ENCODE measurements at regions of chr9 and their contacts with region 1.

Region 1: DNA sequence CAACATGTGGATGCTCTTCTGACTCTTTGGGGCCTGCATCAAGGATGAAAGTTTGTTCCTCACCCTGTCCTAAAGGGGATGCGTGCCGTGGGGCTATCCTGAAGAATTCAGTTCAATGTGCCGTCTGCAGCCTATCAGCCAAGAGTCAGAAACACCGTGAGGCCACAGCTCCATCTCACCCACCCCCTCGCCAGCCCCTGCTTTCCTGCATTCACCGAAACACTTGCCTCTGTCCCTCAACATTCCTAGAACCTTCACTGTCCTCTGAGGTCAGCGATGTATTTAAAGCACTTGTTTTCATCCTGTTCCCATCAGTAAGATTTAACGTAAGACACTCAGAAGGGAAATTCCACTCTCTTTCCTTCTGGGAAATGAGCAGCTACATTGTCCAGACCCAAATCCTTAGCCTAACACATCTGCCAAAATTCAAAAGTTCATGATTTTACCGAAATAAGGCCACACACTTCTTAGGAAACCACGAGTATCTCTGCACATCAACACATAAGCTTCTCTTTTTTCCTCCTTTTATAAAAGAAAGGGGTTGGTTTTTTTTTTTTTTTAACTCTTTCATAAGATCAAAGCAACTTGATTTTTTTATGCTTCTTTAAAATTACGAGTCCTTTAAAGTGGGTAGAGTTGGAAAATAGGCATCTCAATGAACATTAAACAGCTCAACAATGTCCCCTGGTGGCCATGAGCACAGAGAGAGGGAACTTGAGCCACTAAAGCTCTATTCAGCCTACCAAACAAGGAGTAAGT is 100.7 kb downstream of the SUSD1 start:
- DNase-seq: peak; percentile 84
- ATAC-seq: peak; percentile 85
- H3K4me3 Mint-ChIP-seq: peak overlapping the region; percentile 9
- H3K27ac Mint-ChIP-seq: peak overlapping the region; percentile 28
- H3K4me1 Mint-ChIP-seq: peaks cover 28% of the 10 kb centered on the region
- H3K27me3 Mint-ChIP-seq: no peaks in the 10 kb centered on the region
- CTCF ChIP-seq: peak; percentile 91

Region 2: DNA sequence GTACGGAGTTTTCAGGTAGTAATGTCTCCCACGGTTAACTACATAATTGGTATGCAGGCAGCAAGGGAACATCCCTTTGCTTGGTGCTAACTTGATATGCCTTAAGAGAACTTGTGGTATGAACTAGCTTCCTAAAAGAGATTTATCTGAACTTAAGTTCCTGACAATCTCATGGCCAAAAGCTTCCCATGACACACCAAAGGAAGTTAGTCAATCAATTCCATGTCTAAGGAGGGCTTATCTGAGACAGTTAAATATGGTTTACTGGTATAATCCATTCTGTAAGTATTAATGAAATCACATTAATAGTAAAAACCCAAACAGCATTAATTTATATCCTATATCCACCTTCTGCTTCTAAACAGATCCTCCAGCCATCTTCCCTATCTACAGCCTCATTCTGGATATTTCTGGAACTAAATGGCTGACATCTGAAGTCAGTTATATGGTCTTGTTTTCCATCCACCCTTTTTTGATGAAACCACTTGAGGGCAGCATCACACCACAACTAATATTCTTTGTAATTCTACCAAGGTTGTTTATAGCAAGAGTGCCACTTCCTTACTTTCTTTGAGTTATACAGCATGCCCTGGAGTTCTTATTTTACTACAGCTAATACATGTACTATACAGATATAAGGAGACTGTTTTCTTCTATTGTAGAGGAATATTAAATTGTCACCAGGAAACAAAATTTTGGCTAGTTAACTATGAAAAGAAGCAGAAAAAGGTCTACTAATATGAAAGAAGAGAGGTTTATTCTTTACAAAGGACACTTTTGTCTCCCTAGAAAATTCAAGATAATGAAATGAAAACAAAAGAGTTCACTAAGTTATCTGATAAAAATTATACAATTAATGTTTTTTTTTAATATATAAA is 314.4 kb before region 1 on chr9:
- CTCF ChIA-PET with region 1: interaction called, 122 read pairs
- POLR2A ChIA-PET with region 1: interaction called, 4 read pairs
- intact Hi-C with region 1: loop called (anchors 5 kb)
- DNase-seq: peak; percentile 68
- ATAC-seq: peak; percentile 60
- H3K4me3 Mint-ChIP-seq: no peak overlapping the region
- H3K27ac Mint-ChIP-seq: no peak overlapping the region
- H3K4me1 Mint-ChIP-seq: peaks cover 4% of the 10 kb centered on the region
- H3K27me3 Mint-ChIP-seq: no peaks in the 10 kb centered on the region
- CTCF ChIP-seq: peak; percentile 76

Region 3: GRCh38 chr9:111766066-111766465 is 308.4 kb before region 1 on chr9:
- CTCF ChIA-PET with region 1: interaction called, 122 read pairs
- POLR2A ChIA-PET with region 1: interaction called, 4 read pairs
- intact Hi-C with region 1: loop called (anchors 5 kb)
- DNase-seq: no peak
- ATAC-seq: no peak
- H3K4me3 Mint-ChIP-seq: no peak overlapping the region
- H3K27ac Mint-ChIP-seq: no peak overlapping the region
- H3K4me1 Mint-ChIP-seq: peaks cover 5% of the 10 kb centered on the region
- H3K27me3 Mint-ChIP-seq: no peaks in the 10 kb centered on the region
- CTCF ChIP-seq: no peak

Region 4: DNA sequence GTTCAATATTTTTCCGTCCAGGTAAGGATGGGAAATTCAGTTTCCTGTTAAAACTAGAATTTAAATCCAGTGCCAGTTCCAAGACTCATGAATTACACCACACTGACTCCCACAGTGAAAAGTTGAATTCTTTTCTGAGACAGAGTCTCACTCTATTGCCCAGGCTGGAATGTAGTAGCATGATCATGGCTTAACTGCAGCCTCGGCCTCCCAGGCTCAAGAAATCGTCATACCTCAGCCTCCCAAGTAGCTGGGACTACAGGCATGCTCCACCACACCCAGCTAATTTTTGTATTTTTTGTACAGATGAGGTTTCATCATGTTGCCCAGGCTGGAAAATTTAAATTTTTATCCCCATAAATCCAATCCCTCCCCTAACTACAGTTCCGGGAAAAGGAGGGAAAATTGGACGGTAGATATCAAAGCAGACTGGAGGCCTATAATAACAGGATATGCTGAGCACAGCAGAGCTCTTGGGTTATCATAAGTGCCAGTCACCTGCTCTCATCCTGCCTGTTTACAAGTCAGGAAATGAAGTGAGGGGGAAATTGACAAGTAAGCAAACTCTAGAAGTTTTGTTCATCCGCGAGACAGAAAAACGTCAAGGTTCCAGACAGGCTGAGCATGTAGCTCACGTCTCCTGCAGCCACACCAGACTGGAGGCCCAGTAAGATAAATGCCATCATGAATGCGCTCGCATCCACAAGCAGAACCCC is 72.1 kb before region 1 on chr9:
- CTCF ChIA-PET with region 1: no interaction called
- POLR2A ChIA-PET with region 1: no interaction called
- intact Hi-C with region 1: no loop called
- DNase-seq: no peak
- ATAC-seq: peak; percentile 64
- H3K4me3 Mint-ChIP-seq: no peak overlapping the region
- H3K27ac Mint-ChIP-seq: no peak overlapping the region
- H3K4me1 Mint-ChIP-seq: peaks cover 25% of the 10 kb centered on the region
- H3K27me3 Mint-ChIP-seq: no peaks in the 10 kb centered on the region
- CTCF ChIP-seq: no peak

Measured in activated CD8-positive, alpha-beta T cell treated with anti-CD3 and anti-CD28 coated beads for 36 hours (primary cell).